ENCODE measurements at regions of chr22 and their contacts with region 1.

Region 1: DNA sequence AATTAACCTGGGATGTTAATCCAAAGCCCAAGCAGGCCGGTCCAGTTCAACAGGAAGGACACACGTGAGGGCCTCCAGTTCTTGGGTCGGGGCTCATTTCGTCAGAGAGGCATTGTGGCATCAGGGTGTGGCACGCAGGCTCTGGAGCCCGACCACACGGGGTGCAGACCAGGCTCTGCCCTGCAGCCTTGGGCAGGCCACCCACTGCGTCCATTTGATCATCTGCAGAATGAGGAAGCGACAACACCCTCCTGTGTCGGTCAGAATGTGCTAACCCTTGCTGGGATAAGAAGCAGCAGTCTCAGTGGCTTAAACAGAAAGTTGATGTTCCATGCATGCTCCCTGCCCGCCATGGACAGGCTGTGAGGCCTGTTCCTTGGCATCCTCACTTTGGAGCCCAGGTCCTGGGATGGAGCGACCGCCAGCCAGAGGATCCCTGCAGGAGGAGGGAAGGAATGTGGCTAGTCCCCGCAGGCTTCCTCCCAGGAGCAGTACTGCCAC is 10.8 kb downstream of the RIBC2 start:
- DNase-seq: peak in 1 of 5 donors; percentile 12
- H3K4me3 ChIP-seq: no peak overlapping the region
- H3K27ac ChIP-seq: no peak overlapping the region
- H3K4me1 ChIP-seq: no peaks in the 10 kb centered on the region
- H3K27me3 ChIP-seq: no peaks in the 10 kb centered on the region
- CTCF ChIP-seq: no peak
- EP300 ChIP-seq: no peak
- POLR2A ChIP-seq: no peak

Region 2: GRCh38 chr22:43571181-43571580 is 1853.1 kb before region 1 on chr22:
- intact Hi-C with region 1: no loop called
- DNase-seq: no peak
- H3K4me3 ChIP-seq: no peak overlapping the region
- H3K27ac ChIP-seq: no peak overlapping the region
- H3K4me1 ChIP-seq: no peaks in the 10 kb centered on the region
- H3K27me3 ChIP-seq: no peaks in the 10 kb centered on the region
- CTCF ChIP-seq: no peak
- EP300 ChIP-seq: no peak
- POLR2A ChIP-seq: no peak

Region 3: DNA sequence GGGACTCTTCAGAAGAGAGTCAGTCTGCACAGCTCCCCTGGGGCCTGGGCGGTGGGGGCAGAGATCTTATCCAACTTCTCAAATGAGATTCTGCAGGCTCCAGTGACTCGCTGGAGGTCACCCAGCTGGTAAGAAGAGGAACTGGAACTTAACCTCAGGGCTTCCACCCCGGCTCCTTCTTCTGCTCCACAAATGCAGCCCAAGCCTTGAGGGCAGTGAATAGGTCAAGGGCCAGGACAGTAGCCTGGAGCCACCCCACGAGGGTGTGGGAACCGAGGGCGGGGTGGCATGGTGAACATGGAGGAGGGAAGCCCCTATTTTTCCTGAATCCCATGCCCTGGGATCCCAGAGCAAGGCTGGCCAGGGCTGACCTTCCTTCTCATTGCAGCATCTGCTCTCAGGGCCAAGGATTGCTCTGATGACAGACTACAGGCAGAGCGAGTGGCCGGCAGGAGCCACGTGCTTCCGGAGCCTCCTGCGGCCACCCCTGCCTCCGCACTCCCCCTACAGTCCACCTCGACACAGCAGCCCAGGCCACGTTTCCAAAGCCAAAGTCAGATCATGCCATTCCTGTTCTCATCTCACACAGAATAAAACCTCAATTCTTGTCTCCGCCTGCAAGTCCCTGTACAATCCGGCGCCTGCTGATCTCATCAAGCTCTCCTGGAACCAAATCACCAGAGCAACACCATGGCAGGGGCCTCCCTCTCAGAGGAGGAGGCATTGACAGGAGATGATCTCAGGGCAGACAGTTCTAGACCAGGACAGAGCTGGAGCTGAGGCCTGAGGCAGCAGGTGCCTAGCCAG is 160.6 kb before region 1 on chr22:
- intact Hi-C with region 1: loop called in 1 of 4 experiments (anchors 5 kb)
- DNase-seq: peak; percentile 54 to 80 (median 68)
- H3K4me3 ChIP-seq: no peak overlapping the region
- H3K27ac ChIP-seq: no peak overlapping the region
- H3K4me1 ChIP-seq: peaks cover 2% of the 10 kb centered on the region
- H3K27me3 ChIP-seq: no peaks in the 10 kb centered on the region
- CTCF ChIP-seq: peak in 2 of 3 donors; percentile 59 to 64
- EP300 ChIP-seq: no peak
- POLR2A ChIP-seq: no peak

Region 4: GRCh38 chr22:45441138-45441537 is 16.9 kb after region 1 on chr22:
- intact Hi-C with region 1: no loop called
- DNase-seq: peak; percentile 65 to 80 (median 73)
- H3K4me3 ChIP-seq: no peak overlapping the region
- H3K27ac ChIP-seq: no peak overlapping the region
- H3K4me1 ChIP-seq: no peaks in the 10 kb centered on the region
- H3K27me3 ChIP-seq: no peaks in the 10 kb centered on the region
- CTCF ChIP-seq: peak; percentile 48 to 82 (median 76)
- EP300 ChIP-seq: no peak
- POLR2A ChIP-seq: peak; percentile 29

Measured in ovary (tissue), 10 donors.